Left ventricle myocardium superior (tissue), 1 donor: ENCODE measurements at regions of chr5 and their contacts with region 1.

Region 1: GRCh38 chr5:11619339-11620024 is 284.8 kb downstream of the CTNND2 start:
- DNase-seq: no peak
- ATAC-seq: peak; percentile 76

Region 2: DNA sequence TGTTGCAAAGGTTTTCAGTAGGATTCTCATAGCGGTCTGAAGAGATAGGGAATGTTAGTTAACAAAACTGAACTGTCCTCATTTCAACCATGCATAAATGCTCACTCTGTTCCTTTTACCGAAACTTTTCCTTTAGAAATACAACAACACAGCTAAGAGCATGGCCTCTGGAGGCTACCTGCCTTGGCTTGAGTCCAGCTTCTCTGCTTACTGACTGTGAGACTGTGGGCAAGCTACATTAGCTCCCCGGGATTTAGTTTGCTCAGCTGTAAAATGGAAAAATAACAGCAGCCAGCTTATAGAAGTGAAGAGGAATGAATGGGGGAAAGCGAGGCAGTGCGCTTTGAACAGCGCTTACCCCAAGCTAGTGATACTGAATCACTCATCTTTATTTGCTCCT is 350.6 kb before region 1 on chr5:
- intact Hi-C with region 1: loop called (anchors 10 kb)
- DNase-seq: no peak
- ATAC-seq: no peak

Region 3: GRCh38 chr5:11955331-11955730 is 335.8 kb after region 1 on chr5:
- intact Hi-C with region 1: no loop called
- DNase-seq: no peak
- ATAC-seq: no peak